ENCODE measurements at regions of chr3 and their contacts with region 1.

Region 1: GRCh38 chr3:121834696-121835464 is at the starts of genes EAF2 and IQCB1:
- DNase-seq: peak; percentile 93
- ATAC-seq: peak; percentile 95
- H3K4me3 ChIP-seq: peak within 1 kb of the TSS; percentile 95
- H3K27ac ChIP-seq: peak within 1 kb of the TSS; percentile 98
- H3K4me1 ChIP-seq: peaks cover 7% of the 10 kb centered on the region; the same call in 1 of the 2 replicates
- H3K27me3 ChIP-seq: no peaks in the 10 kb centered on the region
- CTCF ChIP-seq: 0 out of 6 replicates have a peak, but pooled peaks of 2 of the 3 experiments have one; percentile 2 to 5
- EP300 ChIP-seq: no peak
- POLR2A ChIP-seq: peak; percentile 97
- RAD21 ChIP-seq: no peak
- polyA plus RNA-seq, gene EAF2: 172 to 193 TPM
- polyA plus RNA-seq, gene IQCB1: 36.0 to 45.1 TPM

Region 2: GRCh38 chr3:120864541-120864940 is 970.3 kb before region 1 on chr3:
- CTCF ChIA-PET with region 1: no interaction called
- POLR2A ChIA-PET with region 1: no interaction called
- RAD21 ChIA-PET with region 1: no interaction called
- SMC1A ChIA-PET with region 1: no interaction called
- in situ Hi-C with region 1: no loop called
- intact Hi-C with region 1: no loop called
- DNase-seq: no peak
- ATAC-seq: no peak
- H3K4me3 ChIP-seq: no peak overlapping the region
- H3K27ac ChIP-seq: no peak overlapping the region
- H3K4me1 ChIP-seq: no peaks in the 10 kb centered on the region
- H3K27me3 ChIP-seq: no peaks in the 10 kb centered on the region
- CTCF ChIP-seq: no peak
- EP300 ChIP-seq: no peak
- POLR2A ChIP-seq: no peak
- RAD21 ChIP-seq: no peak

Region 3: GRCh38 chr3:121749276-121750086 is 85.4 kb before region 1 on chr3 and contains the start of gene GOLGB1:
- CTCF ChIA-PET with region 1: no interaction called
- POLR2A ChIA-PET with region 1: interaction called, 6 read pairs
- RAD21 ChIA-PET with region 1: interaction called, 4 read pairs
- SMC1A ChIA-PET with region 1: interaction called, 6 read pairs
- in situ Hi-C with region 1: no loop called
- intact Hi-C with region 1: loop called (anchors 5 kb)
- DNase-seq: peak; percentile 100
- ATAC-seq: peak; percentile 96
- H3K4me3 ChIP-seq: peak within 1 kb of the TSS; percentile 91
- H3K27ac ChIP-seq: peak within 1 kb of the TSS; percentile 72
- H3K4me1 ChIP-seq: no peaks in the 10 kb centered on the region
- H3K27me3 ChIP-seq: no peaks in the 10 kb centered on the region; a peak in 1 of 4 replicates
- CTCF ChIP-seq: no peak
- EP300 ChIP-seq: no peak
- POLR2A ChIP-seq: peak; percentile 100
- RAD21 ChIP-seq: no peak
- polyA plus RNA-seq, gene GOLGB1: 7.4 to 9.6 TPM

Region 4: GRCh38 chr3:121809249-121809648 is 25.6 kb before region 1 on chr3:
- CTCF ChIA-PET with region 1: interaction called, 5 read pairs
- POLR2A ChIA-PET with region 1: interaction called, 21 read pairs
- RAD21 ChIA-PET with region 1: interaction called, 44 read pairs
- SMC1A ChIA-PET with region 1: interaction called, 171 read pairs
- in situ Hi-C with region 1: no loop called
- intact Hi-C with region 1: no loop called
- DNase-seq: peak; percentile 84
- ATAC-seq: peak; percentile 99
- H3K4me3 ChIP-seq: no peak overlapping the region
- H3K27ac ChIP-seq: peak overlapping the region; percentile 81
- H3K4me1 ChIP-seq: peaks cover 26% of the 10 kb centered on the region
- H3K27me3 ChIP-seq: no peaks in the 10 kb centered on the region
- CTCF ChIP-seq: no peak
- EP300 ChIP-seq: peak; percentile 75 to 87
- POLR2A ChIP-seq: no peak
- RAD21 ChIP-seq: no peak

Region 5: GRCh38 chr3:121855555-121855954 is 20.7 kb after region 1 on chr3:
- CTCF ChIA-PET with region 1: no interaction called
- POLR2A ChIA-PET with region 1: interaction called, 6 read pairs
- RAD21 ChIA-PET with region 1: no interaction called
- SMC1A ChIA-PET with region 1: interaction called, 15 read pairs
- in situ Hi-C with region 1: no loop called
- intact Hi-C with region 1: no loop called
- DNase-seq: no peak
- ATAC-seq: peak; percentile 52; the same call in 1 of the 3 replicates
- H3K4me3 ChIP-seq: no peak overlapping the region
- H3K27ac ChIP-seq: no peak overlapping the region
- H3K4me1 ChIP-seq: no peaks in the 10 kb centered on the region
- H3K27me3 ChIP-seq: no peaks in the 10 kb centered on the region
- CTCF ChIP-seq: peak in 2 of 3 experiments; percentile 26 to 29; a peak in 3 of 6 replicates
- EP300 ChIP-seq: no peak
- POLR2A ChIP-seq: no peak
- RAD21 ChIP-seq: peak; percentile 45; the same call in 1 of the 2 replicates

Region 6: GRCh38 chr3:122074621-122075265 is 239.9 kb after region 1 on chr3:
- CTCF ChIA-PET with region 1: no interaction called
- POLR2A ChIA-PET with region 1: no interaction called
- RAD21 ChIA-PET with region 1: no interaction called
- SMC1A ChIA-PET with region 1: interaction called, 4 read pairs
- in situ Hi-C with region 1: loop called (anchors 5 kb)
- intact Hi-C with region 1: loop called (anchors 5 kb)
- DNase-seq: peak; percentile 92
- ATAC-seq: peak; percentile 70
- H3K4me3 ChIP-seq: peak overlapping the region; percentile 72
- H3K27ac ChIP-seq: peak overlapping the region; percentile 97
- H3K4me1 ChIP-seq: peaks cover 45% of the 10 kb centered on the region
- H3K27me3 ChIP-seq: no peaks in the 10 kb centered on the region
- CTCF ChIP-seq: no peak
- EP300 ChIP-seq: peak; percentile 65 to 76
- POLR2A ChIP-seq: peak; percentile 73
- RAD21 ChIP-seq: no peak

Region 7: DNA sequence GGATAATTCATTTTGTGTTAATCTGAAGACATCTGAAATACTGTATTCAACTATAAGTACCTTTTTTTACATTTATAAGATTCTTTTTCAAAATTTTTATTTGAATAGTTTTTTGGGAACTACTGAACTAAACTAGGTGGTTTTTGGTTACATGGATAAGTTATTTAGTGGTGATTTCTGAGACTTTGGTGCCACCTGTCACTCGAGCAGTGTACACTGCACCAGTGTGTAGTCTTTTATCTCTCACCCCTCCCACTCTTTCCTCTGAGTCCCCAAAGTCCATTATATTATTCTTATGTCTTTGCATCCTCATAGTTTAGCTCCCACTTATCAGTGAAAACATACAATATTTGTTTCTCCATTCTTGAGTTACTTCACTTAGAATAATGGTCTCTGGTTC is 277.9 kb after region 1 on chr3:
- CTCF ChIA-PET with region 1: no interaction called
- POLR2A ChIA-PET with region 1: no interaction called
- RAD21 ChIA-PET with region 1: no interaction called
- SMC1A ChIA-PET with region 1: no interaction called
- in situ Hi-C with region 1: no loop called
- intact Hi-C with region 1: no loop called
- DNase-seq: no peak
- ATAC-seq: peak; percentile 71; the same call in 2 of the 3 replicates
- H3K4me3 ChIP-seq: no peak overlapping the region
- H3K27ac ChIP-seq: no peak overlapping the region
- H3K4me1 ChIP-seq: peaks cover 8% of the 10 kb centered on the region; the same call in 1 of the 2 replicates
- H3K27me3 ChIP-seq: no peaks in the 10 kb centered on the region
- CTCF ChIP-seq: no peak
- EP300 ChIP-seq: no peak
- POLR2A ChIP-seq: no peak
- RAD21 ChIP-seq: no peak

Measured in GM12878 (cell line).